Posterior cingulate gyrus (tissue), 11 donors: ENCODE measurements at regions of chr18 and their contacts with region 1.

Region 1: GRCh38 chr18:57803103-57803969 is at the start of gene ATP8B1:
- DNase-seq: peak in 7 of 10 donors; percentile 13 to 90 (median 27)

Region 2: DNA sequence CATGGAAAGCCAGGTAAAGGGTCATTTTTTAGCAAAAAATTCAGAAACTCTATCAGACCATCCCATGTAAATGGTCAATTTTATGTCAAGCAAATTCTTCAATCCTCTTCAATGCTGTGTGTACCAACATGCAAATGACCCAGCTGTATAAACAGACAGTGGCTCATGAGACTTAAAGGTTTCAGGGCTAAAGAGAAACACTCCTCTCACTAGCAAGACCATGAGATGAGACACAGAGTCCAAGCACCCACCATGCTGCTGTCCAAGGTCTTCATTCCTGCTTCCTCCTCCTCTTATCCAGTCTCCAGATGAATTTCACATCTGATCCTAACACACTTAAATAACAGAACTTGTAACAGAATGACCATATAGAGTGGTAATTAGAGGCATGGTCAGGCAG is 399.0 kb before region 1 on chr18:
- intact Hi-C with region 1: no loop called
- DNase-seq: no peak

Region 3: DNA sequence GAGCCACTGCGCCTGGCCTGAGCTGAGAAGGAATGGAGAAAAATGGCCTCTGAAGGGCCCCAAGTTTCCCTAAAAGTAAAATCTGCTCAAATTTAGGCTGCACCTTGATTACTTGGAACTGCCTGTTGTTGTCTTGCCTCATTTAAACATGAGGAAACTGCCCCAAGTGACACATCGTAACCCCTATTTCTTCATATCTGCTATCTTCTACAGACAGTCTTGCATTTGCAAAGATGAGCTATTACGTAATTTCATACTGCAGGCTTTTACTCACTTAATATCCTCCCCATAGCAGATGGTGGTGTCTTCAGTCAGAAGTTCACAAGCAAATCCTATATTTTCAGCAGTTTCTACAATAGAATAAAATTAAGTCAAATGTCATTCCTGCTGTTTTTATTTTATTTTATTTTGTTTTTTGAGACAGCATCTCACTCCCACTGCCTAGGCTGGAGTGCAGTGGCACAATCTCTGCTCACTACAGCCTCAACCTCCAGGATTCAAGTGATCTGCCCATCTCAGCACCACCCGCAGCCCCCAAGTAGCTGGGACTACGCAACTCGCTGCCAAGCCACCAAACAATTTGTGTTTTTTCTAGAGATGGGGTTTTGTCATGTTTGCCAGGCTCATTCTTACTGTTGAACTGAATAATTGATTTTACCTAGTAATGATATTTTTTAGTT is 136.4 kb before region 1 on chr18:
- intact Hi-C with region 1: loop called (anchors 10 kb)
- DNase-seq: no peak